ENCODE measurements at regions of chr17 and their contacts with region 1.

Region 1: DNA sequence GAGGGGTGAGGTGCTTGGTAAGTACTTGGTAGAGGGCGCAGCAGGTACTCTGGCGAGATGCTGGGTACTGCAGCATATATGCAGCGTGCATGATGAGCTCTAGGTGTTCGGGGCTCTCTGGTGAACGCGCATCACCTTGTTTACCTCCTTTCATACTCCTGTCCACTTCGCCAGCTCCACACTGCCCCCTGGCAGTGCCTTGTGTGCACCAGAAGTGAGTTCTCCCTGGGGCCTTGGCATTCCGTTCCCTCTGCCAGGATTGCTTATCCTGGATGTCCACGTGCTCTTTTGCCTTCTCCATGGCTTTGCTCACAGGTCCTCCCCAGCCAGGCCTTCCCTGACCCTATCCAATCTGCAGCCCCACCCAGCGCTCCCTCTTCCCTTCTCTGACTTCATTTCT is 154.2 kb downstream of the MRM1 start:
- DNase-seq: no peak
- ATAC-seq: no peak

Region 2: DNA sequence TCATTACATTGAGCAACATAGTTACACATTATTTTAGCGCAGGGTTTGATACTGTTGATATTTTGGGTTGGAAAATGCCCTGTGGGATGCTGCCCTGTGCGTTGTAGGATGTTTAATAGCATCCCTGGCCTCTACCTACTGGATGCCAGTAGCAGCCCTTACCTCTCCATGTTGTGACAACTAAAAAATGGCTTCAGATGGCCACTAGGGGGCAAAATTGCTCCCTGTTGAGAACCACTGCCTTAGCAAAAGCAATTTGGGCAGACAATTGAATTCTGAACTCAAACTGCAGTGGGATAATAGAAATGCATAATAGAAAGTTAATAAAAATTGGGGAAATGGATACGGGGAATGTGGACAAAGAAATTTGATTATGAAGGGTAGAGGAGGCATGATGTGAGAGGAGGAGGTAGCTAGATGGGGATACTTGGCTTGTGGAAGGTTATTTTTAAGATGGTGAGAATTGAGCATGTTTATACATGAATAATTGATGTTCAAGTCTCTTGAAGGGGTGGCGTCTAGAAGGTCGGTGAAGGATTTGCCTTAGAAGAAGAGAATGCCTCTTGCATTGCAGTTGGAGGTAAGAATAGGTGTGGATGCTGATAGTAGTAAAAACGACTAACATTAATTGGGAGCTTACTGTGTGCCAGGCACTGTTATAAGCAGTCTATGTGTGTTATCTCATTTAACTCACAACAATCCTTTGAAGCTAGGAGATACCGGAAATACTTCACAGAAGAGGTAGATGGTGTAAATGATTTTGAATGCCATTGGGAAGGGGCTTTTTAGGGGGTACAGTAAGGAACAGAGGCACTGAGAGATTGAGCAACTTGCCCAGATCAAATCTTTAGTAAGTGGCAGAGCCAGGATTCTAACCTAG is 905.9 kb before region 1 on chr17:
- intact Hi-C with region 1: no loop called
- DNase-seq: no peak
- ATAC-seq: peak; percentile 34

Region 3: DNA sequence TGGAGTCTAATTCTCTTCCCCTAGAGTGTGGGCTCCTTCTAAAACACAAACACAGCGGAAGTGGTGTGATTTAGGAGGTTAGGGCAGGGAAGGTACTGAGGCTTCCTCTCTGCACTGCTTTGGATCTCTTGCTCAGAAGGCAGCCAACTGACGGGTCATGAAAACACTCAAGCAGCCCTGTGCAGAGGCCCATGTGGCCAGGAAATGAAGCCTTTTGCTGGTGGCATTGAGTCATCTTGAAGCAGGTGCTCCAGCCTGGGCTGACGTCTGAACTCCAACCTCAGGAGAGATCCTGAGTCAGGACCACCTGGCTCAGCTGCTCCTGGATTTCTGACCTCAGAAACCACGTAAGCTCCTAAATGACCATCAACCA is 81.3 kb before region 1 on chr17:
- intact Hi-C with region 1: loop called (anchors 10 kb)
- DNase-seq: no peak
- ATAC-seq: no peak

Region 4: GRCh38 chr17:36703831-36704266 is 51.7 kb before region 1 on chr17:
- intact Hi-C with region 1: no loop called
- DNase-seq: no peak
- ATAC-seq: no peak

Region 5: GRCh38 chr17:36812762-36813161 is 57.2 kb after region 1 on chr17:
- intact Hi-C with region 1: no loop called
- DNase-seq: no peak
- ATAC-seq: no peak